ENCODE measurements at regions of chr2 and their contacts with region 1.

Region 1: GRCh38 chr2:155377266-155377680 is 678.8 kb downstream of the KCNJ3 start:
- DNase-seq: peak; percentile 35
- ATAC-seq: peak; percentile 70
- H3K4me3 ChIP-seq: no peak overlapping the region
- H3K27ac ChIP-seq: no peak overlapping the region
- H3K4me1 ChIP-seq: no peaks in the 10 kb centered on the region
- H3K27me3 ChIP-seq: no peaks in the 10 kb centered on the region
- CTCF ChIP-seq: peak; percentile 21 to 56 (median 52); a peak in 4 of 6 replicates
- POLR2A ChIP-seq: no peak
- RAD21 ChIP-seq: peak; percentile 84

Region 2: GRCh38 chr2:155815886-155816285 is 438.6 kb after region 1 on chr2:
- CTCF ChIA-PET with region 1: interaction called, 24 read pairs
- POLR2A ChIA-PET with region 1: no interaction called
- RAD21 ChIA-PET with region 1: interaction called, 3 read pairs
- intact Hi-C with region 1: loop called (anchors 5 kb)
- DNase-seq: peak; percentile 23
- ATAC-seq: peak; percentile 95
- H3K4me3 ChIP-seq: no peak overlapping the region
- H3K27ac ChIP-seq: no peak overlapping the region
- H3K4me1 ChIP-seq: no peaks in the 10 kb centered on the region
- H3K27me3 ChIP-seq: no peaks in the 10 kb centered on the region
- CTCF ChIP-seq: peak; percentile 26 to 61 (median 61); a peak in 5 of 6 replicates
- POLR2A ChIP-seq: no peak
- RAD21 ChIP-seq: peak; percentile 72

Region 3: GRCh38 chr2:156332534-156333273 is 955.4 kb after region 1 on chr2 and contains the start of gene NR4A2:
- CTCF ChIA-PET with region 1: interaction called, 11 read pairs
- POLR2A ChIA-PET with region 1: no interaction called
- RAD21 ChIA-PET with region 1: no interaction called
- intact Hi-C with region 1: loop called (anchors 10 kb)
- DNase-seq: peak; percentile 96
- ATAC-seq: peak; percentile 71
- H3K4me3 ChIP-seq: peak within 1 kb of the TSS; percentile 92 to 97
- H3K27ac ChIP-seq: peak within 1 kb of the TSS; percentile 97
- H3K4me1 ChIP-seq: peaks cover 25 to 44% of the 10 kb centered on the region in 2 experiments
- H3K27me3 ChIP-seq: no peaks in the 10 kb centered on the region
- CTCF ChIP-seq: no peak
- POLR2A ChIP-seq: peak; percentile 53
- RAD21 ChIP-seq: no peak
- total RNA-seq, gene NR4A2: 17.9 TPM

Region 4: DNA sequence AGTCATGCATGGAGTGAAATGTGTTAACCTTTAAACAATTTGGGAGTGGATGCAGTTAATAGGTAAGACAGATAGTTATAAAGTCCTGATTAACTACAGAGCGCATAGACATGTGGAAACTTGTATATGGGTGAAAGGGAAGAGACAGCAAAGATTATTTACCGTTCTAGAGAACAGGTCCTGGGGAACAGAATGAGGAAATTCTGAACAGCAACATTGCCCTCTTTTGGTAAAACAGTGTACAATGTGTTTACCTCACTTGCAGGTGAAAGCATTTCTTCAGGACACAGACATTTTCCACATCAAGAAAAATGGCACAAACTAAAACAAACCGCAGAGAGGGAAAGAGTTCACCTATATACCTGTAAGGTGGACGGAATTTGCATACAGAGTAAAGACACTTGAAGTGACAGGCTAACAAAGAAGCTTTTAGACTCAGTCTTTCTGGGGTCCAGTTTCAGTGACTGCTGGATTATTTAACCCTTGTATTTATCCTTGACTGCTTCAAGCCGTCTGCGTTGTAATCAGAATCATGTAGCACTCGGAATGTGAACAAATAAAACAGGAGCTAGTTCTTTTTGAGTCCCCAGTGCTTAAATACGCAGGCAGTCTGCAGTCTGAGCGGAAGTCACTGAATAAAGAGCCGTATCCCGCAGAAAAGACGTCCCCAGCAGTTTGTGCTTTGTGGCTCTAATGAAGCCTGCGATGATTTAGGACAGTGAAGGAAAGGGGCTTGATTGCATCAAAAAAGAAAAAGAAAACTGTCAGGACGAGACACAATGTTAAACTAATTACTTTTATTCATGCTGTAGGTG is 1515.4 kb after region 1 on chr2:
- CTCF ChIA-PET with region 1: interaction called, 5 read pairs
- POLR2A ChIA-PET with region 1: no interaction called
- RAD21 ChIA-PET with region 1: no interaction called
- intact Hi-C with region 1: loop called (anchors 2 kb)
- DNase-seq: peak; percentile 68
- ATAC-seq: peak; percentile 89
- H3K4me3 ChIP-seq: peak overlapping the region; percentile 49 to 67
- H3K27ac ChIP-seq: peak overlapping the region; percentile 56
- H3K4me1 ChIP-seq: peaks cover 2 to 38% of the 10 kb centered on the region in 2 experiments; a peak in 2 of 4 replicates
- H3K27me3 ChIP-seq: no peaks in the 10 kb centered on the region
- CTCF ChIP-seq: peak; percentile 51 to 63 (median 52); a peak in 5 of 6 replicates
- POLR2A ChIP-seq: no peak
- RAD21 ChIP-seq: peak; percentile 89

Region 5: GRCh38 chr2:157194097-157194688 is 1816.9 kb after region 1 on chr2:
- CTCF ChIA-PET with region 1: interaction called, 24 read pairs
- POLR2A ChIA-PET with region 1: no interaction called
- RAD21 ChIA-PET with region 1: no interaction called
- intact Hi-C with region 1: loop called (anchors 2 kb)
- DNase-seq: peak; percentile 49
- ATAC-seq: peak; percentile 80
- H3K4me3 ChIP-seq: no peak overlapping the region
- H3K27ac ChIP-seq: no peak overlapping the region
- H3K4me1 ChIP-seq: peaks cover 0 to 3% of the 10 kb centered on the region in 2 experiments; a peak in 1 of 4 replicates
- H3K27me3 ChIP-seq: no peaks in the 10 kb centered on the region
- CTCF ChIP-seq: peak; percentile 55 to 75 (median 58); a peak in 4 of 6 replicates
- POLR2A ChIP-seq: no peak
- RAD21 ChIP-seq: peak; percentile 90